CD14-positive monocyte (primary cell): ENCODE measurements at regions of chr1 and their contacts with region 1.

Region 1: GRCh38 chr1:151539990-151540981 is at the start of gene TUFT1:
- DNase-seq: peak; percentile 81 to 88 (median 86)
- H3K4me3 ChIP-seq: peak within 1 kb of the TSS; percentile 59 to 87 (median 78)
- H3K4me3 Mint-ChIP-seq: peak within 1 kb of the TSS; percentile 95 to 96
- H3K27ac ChIP-seq: peak within 1 kb of the TSS; percentile 25 to 57
- H3K27ac Mint-ChIP-seq: peak within 1 kb of the TSS; percentile 70 to 89 (median 83)
- H3K4me1 ChIP-seq: peaks cover 21% of the 10 kb centered on the region in 2 donors
- H3K4me1 Mint-ChIP-seq: peaks cover 24% of the 10 kb centered on the region
- H3K27me3 ChIP-seq: peaks cover 5 to 20% of the 10 kb centered on the region in 2 donors
- H3K27me3 Mint-ChIP-seq: peaks cover 21 to 30% (median 27%) of the 10 kb centered on the region in 3 donors
- CTCF ChIP-seq: no peak
- polyA plus RNA-seq, gene TUFT1: 1.5 to 1.7 (median 1.6) TPM

Region 2: GRCh38 chr1:151443846-151444782 is 96.2 kb before region 1 on chr1:
- intact Hi-C with region 1: loop called in 1 of 2 experiments (anchors 10 kb)
- DNase-seq: peak; percentile 65 to 74 (median 69)
- H3K4me3 ChIP-seq: no peak overlapping the region
- H3K4me3 Mint-ChIP-seq: no peak overlapping the region
- H3K27ac ChIP-seq: peak overlapping the region in 1 of 2 donors; percentile 8
- H3K27ac Mint-ChIP-seq: no peak overlapping the region
- H3K4me1 ChIP-seq: no peaks in the 10 kb centered on the region
- H3K4me1 Mint-ChIP-seq: peaks cover 9% of the 10 kb centered on the region
- H3K27me3 ChIP-seq: no peaks in the 10 kb centered on the region
- H3K27me3 Mint-ChIP-seq: peaks cover 0 to 1% (median 1%) of the 10 kb centered on the region in 3 donors
- CTCF ChIP-seq: peak; percentile 83

Region 3: GRCh38 chr1:151611832-151612500 is 71.7 kb after region 1 on chr1 and contains the start of gene SNX27:
- intact Hi-C with region 1: no loop called
- DNase-seq: peak; percentile 91 to 92 (median 92)
- H3K4me3 ChIP-seq: peak within 1 kb of the TSS; percentile 64 to 90 (median 89)
- H3K4me3 Mint-ChIP-seq: peak within 1 kb of the TSS; percentile 94 to 97
- H3K27ac ChIP-seq: peak within 1 kb of the TSS; percentile 95
- H3K27ac Mint-ChIP-seq: peak within 1 kb of the TSS; percentile 97 to 100 (median 99)
- H3K4me1 ChIP-seq: peaks cover 52 to 67% of the 10 kb centered on the region in 2 donors
- H3K4me1 Mint-ChIP-seq: peaks cover 61% of the 10 kb centered on the region
- H3K27me3 ChIP-seq: no peaks in the 10 kb centered on the region
- H3K27me3 Mint-ChIP-seq: peaks cover 0 to 3% (median 0%) of the 10 kb centered on the region in 3 donors
- CTCF ChIP-seq: no peak
- polyA plus RNA-seq, gene SNX27: 40.1 to 57.1 (median 47.6) TPM

Region 4: DNA sequence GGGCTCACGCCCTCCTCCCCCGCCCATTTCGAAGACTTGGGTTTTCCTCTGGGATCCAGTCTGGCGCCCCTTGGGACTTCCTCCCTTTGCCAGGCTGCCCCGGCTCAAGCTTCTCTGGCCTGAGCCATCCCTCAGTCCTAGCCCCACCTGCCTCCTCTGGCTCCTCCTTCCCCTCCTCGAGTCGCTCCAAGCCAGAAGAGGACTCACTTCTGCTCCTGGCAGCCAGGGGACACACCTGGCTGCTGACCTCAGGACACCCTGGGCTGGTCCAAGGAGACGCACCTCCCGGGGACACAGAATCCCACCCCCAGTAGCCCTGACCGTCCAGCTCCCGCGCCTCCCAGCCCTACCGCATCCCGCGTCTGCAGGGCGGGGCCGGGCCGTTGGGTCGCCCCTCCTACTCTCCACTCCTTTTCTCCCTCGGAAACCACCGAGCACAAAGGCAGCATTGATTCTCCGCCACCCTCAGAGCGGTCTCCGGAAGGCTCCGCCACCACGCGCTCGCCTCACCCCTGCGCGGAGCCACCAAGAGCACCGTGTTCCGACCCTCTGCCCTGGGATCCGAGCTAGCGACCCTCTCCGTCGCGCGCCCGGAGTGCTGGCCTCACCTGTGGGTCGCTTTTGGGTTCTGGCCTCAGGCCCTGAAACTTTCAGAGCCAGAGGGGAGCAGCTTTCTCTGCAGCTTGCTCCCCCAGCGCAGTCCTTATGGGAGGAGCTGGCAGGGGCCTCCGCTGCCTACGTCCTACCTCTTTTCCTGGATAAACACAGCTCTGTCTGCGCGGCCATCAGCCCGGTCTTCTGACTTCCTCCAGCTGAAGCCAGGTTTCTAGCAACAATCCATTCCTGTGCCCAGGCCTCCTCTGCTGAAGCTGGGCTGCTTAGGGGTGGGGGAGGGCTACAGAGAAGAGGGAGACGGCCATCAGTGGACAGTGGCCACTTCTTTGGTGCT is 299.4 kb after region 1 on chr1 and contains the start of gene C2CD4D:
- intact Hi-C with region 1: loop called in 1 of 2 experiments (anchors 5 kb)
- DNase-seq: peak in 1 of 3 donors; percentile 29
- H3K4me3 ChIP-seq: peak within 1 kb of the TSS in 2 of 3 experiments; percentile 13 to 68
- H3K4me3 Mint-ChIP-seq: peak within 1 kb of the TSS; percentile 72 to 91
- H3K27ac ChIP-seq: no peak within 1 kb of the TSS
- H3K27ac Mint-ChIP-seq: no peak within 1 kb of the TSS
- H3K4me1 ChIP-seq: peaks cover 32 to 55% of the 10 kb centered on the region in 2 donors
- H3K4me1 Mint-ChIP-seq: peaks cover 47% of the 10 kb centered on the region
- H3K27me3 ChIP-seq: peaks cover 47 to 69% of the 10 kb centered on the region in 2 donors
- H3K27me3 Mint-ChIP-seq: peaks cover 52 to 79% (median 67%) of the 10 kb centered on the region in 3 donors
- CTCF ChIP-seq: no peak
- polyA plus RNA-seq, gene C2CD4D: not detected